WTC11 (cell line): ENCODE measurements at regions of chr15 and their contacts with region 1.

Region 1: DNA sequence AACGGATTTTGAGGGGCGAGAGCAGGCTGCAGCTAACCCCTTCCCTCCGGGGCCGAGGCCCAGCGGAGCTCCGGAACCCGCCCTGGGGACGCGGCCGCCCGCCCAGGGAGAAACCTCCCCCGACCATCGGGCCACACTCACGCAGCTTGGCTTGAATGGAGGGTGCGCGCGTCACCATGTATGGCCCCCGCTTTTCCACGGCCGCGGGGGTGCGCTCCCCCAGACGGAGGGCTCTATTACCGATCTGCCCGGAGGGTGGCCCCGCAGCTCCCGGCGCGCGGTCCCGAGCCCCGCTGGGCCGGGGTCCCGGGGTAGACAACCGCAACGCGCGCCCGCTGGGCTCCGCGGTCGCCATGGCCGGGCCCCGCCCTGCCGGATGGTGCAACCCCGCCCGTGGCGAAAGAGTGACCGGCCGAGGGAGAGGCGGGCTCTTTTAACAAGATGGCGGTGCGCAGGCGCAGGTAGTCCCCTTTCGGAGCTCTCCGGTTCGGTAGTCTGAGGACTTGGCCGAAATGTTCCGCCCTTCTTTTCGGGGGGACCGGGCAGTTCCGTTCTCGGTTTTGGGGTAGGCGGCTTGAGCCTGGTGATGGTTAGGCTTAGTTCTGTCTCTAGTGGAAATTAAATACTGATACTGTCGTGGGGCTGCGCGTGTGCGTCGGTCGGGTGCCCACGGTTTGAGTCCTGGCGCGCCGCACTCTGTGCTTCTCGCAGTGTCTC is at the start of gene FAM219B:
- DNase-seq: peak; percentile 93
- ATAC-seq: peak; percentile 90
- H3K4me3 Mint-ChIP-seq: peak within 1 kb of the TSS; percentile 94
- H3K27ac Mint-ChIP-seq: peak within 1 kb of the TSS; percentile 94
- H3K4me1 Mint-ChIP-seq: peaks cover 15% of the 10 kb centered on the region
- H3K27me3 Mint-ChIP-seq: no peaks in the 10 kb centered on the region
- CTCF ChIP-seq: no peak
- total RNA-seq, gene FAM219B: 67.3 to 99.6 TPM (median 87.8 TPM) in 3 replicates

Region 2: GRCh38 chr15:74680456-74680855 is 226.1 kb before region 1 on chr15:
- CTCF ChIA-PET with region 1: no interaction called
- POLR2A ChIA-PET with region 1: no interaction called
- DNase-seq: no peak
- ATAC-seq: no peak
- H3K4me3 Mint-ChIP-seq: no peak overlapping the region
- H3K27ac Mint-ChIP-seq: no peak overlapping the region
- H3K4me1 Mint-ChIP-seq: no peaks in the 10 kb centered on the region
- H3K27me3 Mint-ChIP-seq: no peaks in the 10 kb centered on the region
- CTCF ChIP-seq: no peak

Region 3: GRCh38 chr15:74793135-74794028 is 113.2 kb before region 1 on chr15:
- CTCF ChIA-PET with region 1: interaction called, 13 read pairs
- POLR2A ChIA-PET with region 1: no interaction called
- DNase-seq: no peak
- ATAC-seq: peak; percentile 40
- H3K4me3 Mint-ChIP-seq: no peak overlapping the region
- H3K27ac Mint-ChIP-seq: no peak overlapping the region
- H3K4me1 Mint-ChIP-seq: peaks cover 31% of the 10 kb centered on the region
- H3K27me3 Mint-ChIP-seq: no peaks in the 10 kb centered on the region; the same call in 1 of the 2 replicates
- CTCF ChIP-seq: no peak

Region 4: DNA sequence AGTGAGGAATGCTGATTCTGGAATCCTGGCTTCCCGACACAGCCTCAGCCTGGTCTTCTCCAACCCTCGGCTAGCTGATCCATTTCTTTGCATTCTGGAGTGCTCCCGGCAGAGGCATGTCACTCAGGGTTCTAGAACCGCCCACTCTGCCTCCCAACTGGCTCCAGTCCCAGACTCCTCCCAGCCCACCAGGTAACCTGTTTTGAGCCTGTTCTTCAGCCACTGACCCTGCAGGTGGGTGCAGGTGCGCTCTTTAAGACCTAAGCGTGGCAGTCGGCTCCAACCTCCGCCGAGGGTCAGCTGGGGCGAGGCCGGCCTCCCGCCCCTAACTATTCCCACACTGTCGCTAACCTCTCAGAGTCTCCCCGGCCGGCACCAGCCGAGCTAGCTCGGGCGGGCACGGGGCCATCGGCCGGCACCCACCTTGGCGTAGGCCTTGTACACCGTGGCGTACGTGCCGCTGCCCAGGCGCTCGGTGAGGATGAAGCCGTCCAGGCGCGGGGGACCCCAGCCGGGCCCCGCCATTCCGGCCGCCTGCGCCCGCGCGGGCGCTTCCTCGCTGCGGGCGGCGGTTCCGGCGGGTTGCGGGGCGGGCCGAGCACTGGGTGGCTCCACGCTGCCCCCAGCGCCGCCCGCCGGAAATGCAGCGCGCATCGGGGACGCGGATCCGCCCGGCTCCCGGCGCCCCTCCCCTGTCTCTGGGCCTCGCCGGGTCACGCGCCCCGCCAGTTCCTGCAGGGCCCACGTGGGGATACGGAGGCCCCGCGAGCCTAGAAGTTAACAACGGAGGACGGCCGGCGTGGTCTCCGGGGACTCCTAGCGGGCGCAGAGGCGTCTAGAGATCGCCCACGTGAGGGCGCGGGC is 63.8 kb before region 1 on chr15 and contains the start of gene ULK3:
- CTCF ChIA-PET with region 1: interaction called, 33 read pairs
- POLR2A ChIA-PET with region 1: interaction called, 5 read pairs
- DNase-seq: peak; percentile 87
- ATAC-seq: peak; percentile 87
- H3K4me3 Mint-ChIP-seq: peak within 1 kb of the TSS; percentile 87
- H3K27ac Mint-ChIP-seq: peak within 1 kb of the TSS; percentile 91
- H3K4me1 Mint-ChIP-seq: peaks cover 21% of the 10 kb centered on the region
- H3K27me3 Mint-ChIP-seq: no peaks in the 10 kb centered on the region
- CTCF ChIP-seq: peak; percentile 76
- total RNA-seq, gene ULK3: 34.4 to 38.9 TPM (median 37.4 TPM) in 3 replicates

Region 5: GRCh38 chr15:74878273-74878672 is 28.3 kb before region 1 on chr15:
- CTCF ChIA-PET with region 1: interaction called, 27 read pairs
- POLR2A ChIA-PET with region 1: interaction called, 3 read pairs
- DNase-seq: no peak
- ATAC-seq: no peak
- H3K4me3 Mint-ChIP-seq: no peak overlapping the region
- H3K27ac Mint-ChIP-seq: no peak overlapping the region
- H3K4me1 Mint-ChIP-seq: no peaks in the 10 kb centered on the region
- H3K27me3 Mint-ChIP-seq: peaks cover 7% of the 10 kb centered on the region
- CTCF ChIP-seq: no peak

Region 6: GRCh38 chr15:74937596-74938296 is 31.1 kb after region 1 on chr15 and contains the start of gene COX5A:
- CTCF ChIA-PET with region 1: interaction called, 23 read pairs
- POLR2A ChIA-PET with region 1: interaction called, 7 read pairs
- DNase-seq: peak; percentile 86
- ATAC-seq: peak; percentile 92
- H3K4me3 Mint-ChIP-seq: peak within 1 kb of the TSS; percentile 91
- H3K27ac Mint-ChIP-seq: peak within 1 kb of the TSS; percentile 91
- H3K4me1 Mint-ChIP-seq: peaks cover 8% of the 10 kb centered on the region
- H3K27me3 Mint-ChIP-seq: no peaks in the 10 kb centered on the region; the same call in none of the 2 replicates
- CTCF ChIP-seq: no peak
- total RNA-seq, gene COX5A: 336 to 355 TPM (median 354 TPM) in 3 replicates

Region 7: GRCh38 chr15:74995241-74995778 is 88.7 kb after region 1 on chr15 and contains the start of gene SCAMP5:
- CTCF ChIA-PET with region 1: interaction called, 17 read pairs
- POLR2A ChIA-PET with region 1: interaction called, 4 read pairs
- DNase-seq: peak; percentile 99
- ATAC-seq: peak; percentile 88
- H3K4me3 Mint-ChIP-seq: peak within 1 kb of the TSS; percentile 79
- H3K27ac Mint-ChIP-seq: no peak within 1 kb of the TSS
- H3K4me1 Mint-ChIP-seq: peaks cover 20% of the 10 kb centered on the region
- H3K27me3 Mint-ChIP-seq: peaks cover 22% of the 10 kb centered on the region
- CTCF ChIP-seq: no peak
- total RNA-seq, gene SCAMP5: 65.7 to 70.1 TPM (median 67.0 TPM) in 3 replicates

Region 8: GRCh38 chr15:75389791-75390382 is 483.3 kb after region 1 on chr15:
- CTCF ChIA-PET with region 1: no interaction called
- POLR2A ChIA-PET with region 1: no interaction called
- DNase-seq: no peak
- ATAC-seq: no peak
- H3K4me3 Mint-ChIP-seq: no peak overlapping the region
- H3K27ac Mint-ChIP-seq: no peak overlapping the region
- H3K4me1 Mint-ChIP-seq: no peaks in the 10 kb centered on the region
- H3K27me3 Mint-ChIP-seq: no peaks in the 10 kb centered on the region
- CTCF ChIP-seq: no peak